Activated CD8-positive, alpha-beta T cell treated with anti-CD3 and anti-CD28 coated beads for 36 hours (primary cell): ENCODE measurements at regions of chr12 and their contacts with region 1.

Region 1: DNA sequence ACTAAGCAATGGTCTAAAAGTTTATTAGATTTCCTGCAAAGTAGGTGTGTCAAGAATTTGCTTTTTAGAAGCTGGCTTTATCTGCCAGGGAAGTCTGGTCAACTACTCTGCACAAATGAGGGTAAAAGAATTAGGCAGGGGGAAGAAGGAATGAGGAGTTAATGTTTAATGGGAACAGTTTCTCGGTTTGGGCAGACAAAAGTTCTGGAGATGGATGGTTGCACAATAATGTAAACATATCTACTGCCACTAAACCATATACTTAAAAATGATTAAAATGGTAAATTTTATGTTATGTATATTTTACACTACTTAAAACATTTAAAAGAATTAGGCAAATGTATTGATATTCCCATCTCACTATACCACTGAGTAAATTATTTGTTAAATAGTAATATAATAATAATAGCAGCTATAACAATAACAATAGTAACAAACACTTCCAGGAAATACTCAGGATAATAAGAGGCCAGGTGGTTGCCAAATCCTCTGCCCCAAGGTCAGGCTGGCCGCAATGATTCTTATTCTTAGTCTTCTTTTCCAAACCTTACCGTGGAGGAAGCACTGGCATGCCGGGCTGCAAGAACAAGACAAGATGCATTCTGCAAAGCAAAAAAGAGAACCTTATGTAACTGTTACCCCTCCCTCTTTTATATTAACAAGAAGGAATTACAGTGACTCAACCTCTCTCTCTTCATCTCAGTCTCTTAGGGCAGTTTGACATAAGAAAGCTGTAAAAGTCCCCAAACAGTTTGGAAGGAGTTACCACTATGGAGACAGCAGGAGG is 13.9 kb downstream of the CS start:
- DNase-seq: no peak
- ATAC-seq: no peak
- H3K4me3 Mint-ChIP-seq: no peak overlapping the region
- H3K27ac Mint-ChIP-seq: peak overlapping the region; percentile 58
- H3K4me1 Mint-ChIP-seq: peaks cover 10% of the 10 kb centered on the region
- H3K27me3 Mint-ChIP-seq: no peaks in the 10 kb centered on the region
- CTCF ChIP-seq: no peak

Region 2: GRCh38 chr12:56206457-56207166 is 79.6 kb before region 1 on chr12:
- CTCF ChIA-PET with region 1: interaction called, 10 read pairs
- POLR2A ChIA-PET with region 1: no interaction called
- intact Hi-C with region 1: no loop called
- DNase-seq: peak; percentile 67
- ATAC-seq: peak; percentile 80
- H3K4me3 Mint-ChIP-seq: no peak overlapping the region
- H3K27ac Mint-ChIP-seq: no peak overlapping the region
- H3K4me1 Mint-ChIP-seq: peaks cover 4% of the 10 kb centered on the region
- H3K27me3 Mint-ChIP-seq: no peaks in the 10 kb centered on the region
- CTCF ChIP-seq: peak; percentile 36

Region 3: DNA sequence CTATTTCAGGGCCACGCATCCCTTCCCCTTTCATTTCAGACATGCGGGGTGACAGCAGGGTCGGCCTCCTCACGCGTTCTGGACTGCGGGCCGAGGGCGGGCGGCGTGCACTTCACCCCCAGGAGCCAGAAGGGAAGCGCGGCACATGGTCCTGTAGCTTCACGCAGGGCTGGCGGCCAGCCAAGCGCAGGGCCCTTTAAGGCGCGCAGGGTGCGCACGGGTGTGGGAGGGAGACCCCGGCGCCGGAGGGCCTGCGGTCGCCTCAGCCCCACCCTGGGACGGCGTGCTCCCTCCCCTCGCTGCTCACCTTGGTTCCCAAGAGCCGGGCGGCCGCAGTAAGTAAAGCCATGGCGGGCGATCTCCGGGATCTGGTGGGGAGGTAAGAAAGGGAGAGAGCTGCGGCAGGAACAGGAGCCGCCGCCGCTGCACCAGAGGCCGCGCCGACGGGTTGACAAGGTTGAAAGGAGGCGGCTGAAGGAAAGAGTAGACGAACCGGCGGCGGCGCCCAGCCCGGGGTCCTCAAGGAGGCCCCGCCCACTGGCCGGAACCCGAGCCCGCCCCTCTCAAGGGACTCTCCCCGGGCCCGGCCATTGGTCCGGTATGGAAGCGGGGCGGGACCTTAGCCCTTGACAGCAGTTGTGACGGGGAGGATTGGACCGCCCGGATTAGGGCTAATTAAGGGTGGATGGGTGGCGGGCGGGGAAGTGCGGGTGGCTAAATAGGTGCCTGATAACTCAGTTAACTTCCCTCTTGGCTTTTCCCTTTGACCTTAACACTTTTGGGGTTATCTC is 13.8 kb after region 1 on chr12 and contains the start of gene CS:
- CTCF ChIA-PET with region 1: interaction called, 3 read pairs
- POLR2A ChIA-PET with region 1: interaction called, 11 read pairs
- intact Hi-C with region 1: no loop called
- DNase-seq: peak; percentile 99
- ATAC-seq: peak; percentile 99
- H3K4me3 Mint-ChIP-seq: peak within 1 kb of the TSS; percentile 93
- H3K27ac Mint-ChIP-seq: peak within 1 kb of the TSS; percentile 94
- H3K4me1 Mint-ChIP-seq: peaks cover 43% of the 10 kb centered on the region
- H3K27me3 Mint-ChIP-seq: no peaks in the 10 kb centered on the region
- CTCF ChIP-seq: no peak
- total RNA-seq, gene CS: 292 to 297 TPM

Region 4: DNA sequence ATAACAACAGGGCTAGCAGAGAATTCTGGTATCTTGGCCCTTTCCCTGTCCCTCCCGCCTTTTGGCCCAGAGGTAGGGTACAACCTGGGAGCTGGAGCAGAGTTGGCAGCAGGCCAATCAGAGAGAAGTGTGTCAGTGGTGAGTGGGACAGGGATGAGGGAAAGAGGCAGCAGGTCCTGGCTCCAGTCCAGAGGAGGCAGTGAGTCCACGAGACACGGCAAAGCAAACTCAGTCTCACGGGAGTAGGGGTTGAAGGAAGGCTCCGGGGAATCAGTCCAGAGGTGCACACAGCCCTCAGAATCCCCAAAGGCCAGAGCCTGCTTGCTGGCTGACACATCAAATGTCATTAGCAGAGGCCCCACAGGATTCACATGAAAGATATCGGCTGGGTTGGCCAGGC is 40.3 kb after region 1 on chr12:
- CTCF ChIA-PET with region 1: no interaction called
- POLR2A ChIA-PET with region 1: no interaction called
- intact Hi-C with region 1: no loop called
- DNase-seq: no peak
- ATAC-seq: no peak
- H3K4me3 Mint-ChIP-seq: no peak overlapping the region
- H3K27ac Mint-ChIP-seq: no peak overlapping the region
- H3K4me1 Mint-ChIP-seq: peaks cover 6% of the 10 kb centered on the region
- H3K27me3 Mint-ChIP-seq: no peaks in the 10 kb centered on the region
- CTCF ChIP-seq: no peak